Activated naive CD4-positive, alpha-beta T cell treated with anti-CD3 and anti-CD28 coated beads for 36 hours (primary cell): ENCODE measurements at regions of chr11 and their contacts with region 1.

Region 1: GRCh38 chr11:82701847-82702520 is 31.7 kb downstream of the FAM181B start:
- DNase-seq: peak; percentile 58
- H3K4me3 Mint-ChIP-seq: no peak overlapping the region
- H3K27ac Mint-ChIP-seq: no peak overlapping the region
- H3K4me1 Mint-ChIP-seq: no peaks in the 10 kb centered on the region
- H3K27me3 Mint-ChIP-seq: peaks cover 5% of the 10 kb centered on the region

Region 2: GRCh38 chr11:81644239-81644840 is 1057.6 kb before region 1 on chr11:
- CTCF ChIA-PET with region 1: no interaction called
- intact Hi-C with region 1: loop called (anchors 1 kb)
- DNase-seq: peak; percentile 19
- H3K4me3 Mint-ChIP-seq: no peak overlapping the region
- H3K27ac Mint-ChIP-seq: no peak overlapping the region
- H3K4me1 Mint-ChIP-seq: no peaks in the 10 kb centered on the region
- H3K27me3 Mint-ChIP-seq: peaks cover 36% of the 10 kb centered on the region

Region 3: GRCh38 chr11:82046778-82047177 is 655.2 kb before region 1 on chr11:
- CTCF ChIA-PET with region 1: no interaction called
- intact Hi-C with region 1: loop called (anchors 10 kb)
- DNase-seq: no peak
- H3K4me3 Mint-ChIP-seq: no peak overlapping the region
- H3K27ac Mint-ChIP-seq: no peak overlapping the region
- H3K4me1 Mint-ChIP-seq: no peaks in the 10 kb centered on the region
- H3K27me3 Mint-ChIP-seq: peaks cover 5% of the 10 kb centered on the region

Region 4: GRCh38 chr11:82229341-82229740 is 472.6 kb before region 1 on chr11:
- CTCF ChIA-PET with region 1: no interaction called
- intact Hi-C with region 1: loop called (anchors 10 kb)
- DNase-seq: no peak
- H3K4me3 Mint-ChIP-seq: no peak overlapping the region
- H3K27ac Mint-ChIP-seq: no peak overlapping the region
- H3K4me1 Mint-ChIP-seq: no peaks in the 10 kb centered on the region
- H3K27me3 Mint-ChIP-seq: no peaks in the 10 kb centered on the region

Region 5: GRCh38 chr11:82682003-82682751 is 19.8 kb before region 1 on chr11:
- CTCF ChIA-PET with region 1: interaction called, 13 read pairs
- intact Hi-C with region 1: no loop called
- DNase-seq: no peak
- H3K4me3 Mint-ChIP-seq: no peak overlapping the region
- H3K27ac Mint-ChIP-seq: no peak overlapping the region
- H3K4me1 Mint-ChIP-seq: no peaks in the 10 kb centered on the region
- H3K27me3 Mint-ChIP-seq: peaks cover 2% of the 10 kb centered on the region

Region 6: DNA sequence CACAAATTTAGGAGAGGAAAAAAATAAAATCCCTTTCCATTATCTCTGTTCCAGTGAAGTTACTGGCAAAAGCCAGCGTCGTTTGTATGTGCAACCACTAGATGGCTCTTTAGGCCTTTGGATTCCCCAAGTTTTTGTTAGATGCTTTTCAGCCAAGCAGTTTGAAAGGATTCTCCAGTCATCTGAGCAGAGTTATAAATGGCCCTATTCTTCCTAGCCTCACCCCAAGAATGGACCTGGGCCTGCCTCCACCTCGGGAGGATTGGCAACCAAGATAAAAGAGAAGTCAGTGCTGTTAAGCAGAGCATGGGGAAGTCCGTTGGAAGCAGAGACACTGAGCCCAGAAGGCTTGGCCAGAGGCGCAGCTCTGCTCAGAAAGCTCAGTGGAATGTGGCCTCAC is 16.3 kb after region 1 on chr11:
- CTCF ChIA-PET with region 1: interaction called, 13 read pairs
- intact Hi-C with region 1: no loop called
- DNase-seq: peak; percentile 44
- H3K4me3 Mint-ChIP-seq: no peak overlapping the region
- H3K27ac Mint-ChIP-seq: no peak overlapping the region
- H3K4me1 Mint-ChIP-seq: peaks cover 4% of the 10 kb centered on the region
- H3K27me3 Mint-ChIP-seq: no peaks in the 10 kb centered on the region

Region 7: GRCh38 chr11:82842019-82842418 is 140.0 kb after region 1 on chr11:
- CTCF ChIA-PET with region 1: no interaction called
- intact Hi-C with region 1: no loop called
- DNase-seq: no peak
- H3K4me3 Mint-ChIP-seq: no peak overlapping the region
- H3K27ac Mint-ChIP-seq: no peak overlapping the region
- H3K4me1 Mint-ChIP-seq: no peaks in the 10 kb centered on the region
- H3K27me3 Mint-ChIP-seq: no peaks in the 10 kb centered on the region

Region 8: DNA sequence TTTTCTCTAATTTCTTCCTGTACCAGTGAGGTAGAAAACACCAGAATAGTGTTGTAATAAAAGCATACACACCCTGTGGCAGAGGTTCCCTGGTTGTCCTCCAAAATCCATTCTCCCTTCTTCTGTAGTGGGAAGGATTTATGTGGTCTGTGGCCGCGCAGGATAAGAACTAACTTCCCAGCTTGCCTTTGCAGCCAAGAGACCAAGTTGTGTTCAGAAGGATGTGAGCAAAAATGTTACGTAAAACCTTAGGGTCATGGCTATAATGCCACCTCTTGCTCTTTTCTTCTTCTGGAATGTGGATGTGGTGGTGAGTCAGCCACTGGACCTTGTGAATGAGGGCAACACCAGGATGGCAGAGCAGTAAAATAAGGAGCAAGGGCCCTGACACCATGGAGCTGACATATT is 555.8 kb after region 1 on chr11:
- CTCF ChIA-PET with region 1: no interaction called
- intact Hi-C with region 1: no loop called
- DNase-seq: no peak
- H3K4me3 Mint-ChIP-seq: no peak overlapping the region
- H3K27ac Mint-ChIP-seq: no peak overlapping the region
- H3K4me1 Mint-ChIP-seq: no peaks in the 10 kb centered on the region
- H3K27me3 Mint-ChIP-seq: no peaks in the 10 kb centered on the region

Region 9: GRCh38 chr11:84355911-84356310 is 1653.9 kb after region 1 on chr11:
- CTCF ChIA-PET with region 1: no interaction called
- intact Hi-C with region 1: no loop called
- DNase-seq: no peak
- H3K4me3 Mint-ChIP-seq: no peak overlapping the region
- H3K27ac Mint-ChIP-seq: no peak overlapping the region
- H3K4me1 Mint-ChIP-seq: no peaks in the 10 kb centered on the region
- H3K27me3 Mint-ChIP-seq: no peaks in the 10 kb centered on the region